HCT116 (cell line): ENCODE measurements at regions of chr19 and their contacts with region 1.

Region 1: GRCh38 chr19:5803752-5804515 is 933 bp upstream of the NRTN start:
- DNase-seq: peak; percentile 78
- ATAC-seq: peak; percentile 88
- H3K4me3 ChIP-seq: peak overlapping the region; percentile 39 to 48
- H3K27ac ChIP-seq: peak overlapping the region; percentile 7; the same call in 1 of the 2 replicates
- H3K4me1 ChIP-seq: peaks cover 5 to 24% of the 10 kb centered on the region in 2 experiments
- H3K27me3 ChIP-seq: no peaks in the 10 kb centered on the region
- CTCF ChIP-seq: peak; percentile 98 to 100 (median 100)
- POLR2A ChIP-seq: no peak
- RAD21 ChIP-seq: peak; percentile 97

Region 2: GRCh38 chr19:5321851-5322681 is 481.9 kb before region 1 on chr19:
- CTCF ChIA-PET with region 1: no interaction called
- POLR2A ChIA-PET with region 1: no interaction called
- RAD21 ChIA-PET with region 1: no interaction called
- intact Hi-C with region 1: no loop called
- DNase-seq: no peak
- ATAC-seq: no peak
- H3K4me3 ChIP-seq: no peak overlapping the region
- H3K27ac ChIP-seq: no peak overlapping the region
- H3K4me1 ChIP-seq: no peaks in the 10 kb centered on the region
- H3K27me3 ChIP-seq: no peaks in the 10 kb centered on the region
- CTCF ChIP-seq: no peak
- POLR2A ChIP-seq: no peak
- RAD21 ChIP-seq: no peak

Region 3: GRCh38 chr19:5719961-5720790 is 83.8 kb before region 1 on chr19 and contains the starts of genes CATSPERD and LONP1:
- CTCF ChIA-PET with region 1: interaction called, 5 read pairs
- POLR2A ChIA-PET with region 1: no interaction called
- RAD21 ChIA-PET with region 1: interaction called in 1 of 2 experiments, 10 read pairs
- intact Hi-C with region 1: no loop called
- DNase-seq: peak; percentile 97
- ATAC-seq: peak; percentile 92
- H3K4me3 ChIP-seq: peak within 1 kb of the TSS; percentile 99 to 100
- H3K27ac ChIP-seq: peak within 1 kb of the TSS; percentile 85
- H3K4me1 ChIP-seq: peaks cover 10 to 28% of the 10 kb centered on the region in 2 experiments
- H3K27me3 ChIP-seq: no peaks in the 10 kb centered on the region
- CTCF ChIP-seq: peak; percentile 62 to 92 (median 88)
- POLR2A ChIP-seq: peak; percentile 67
- RAD21 ChIP-seq: no peak
- total RNA-seq, gene CATSPERD: not detected
- total RNA-seq, gene LONP1: 180 TPM

Region 4: DNA sequence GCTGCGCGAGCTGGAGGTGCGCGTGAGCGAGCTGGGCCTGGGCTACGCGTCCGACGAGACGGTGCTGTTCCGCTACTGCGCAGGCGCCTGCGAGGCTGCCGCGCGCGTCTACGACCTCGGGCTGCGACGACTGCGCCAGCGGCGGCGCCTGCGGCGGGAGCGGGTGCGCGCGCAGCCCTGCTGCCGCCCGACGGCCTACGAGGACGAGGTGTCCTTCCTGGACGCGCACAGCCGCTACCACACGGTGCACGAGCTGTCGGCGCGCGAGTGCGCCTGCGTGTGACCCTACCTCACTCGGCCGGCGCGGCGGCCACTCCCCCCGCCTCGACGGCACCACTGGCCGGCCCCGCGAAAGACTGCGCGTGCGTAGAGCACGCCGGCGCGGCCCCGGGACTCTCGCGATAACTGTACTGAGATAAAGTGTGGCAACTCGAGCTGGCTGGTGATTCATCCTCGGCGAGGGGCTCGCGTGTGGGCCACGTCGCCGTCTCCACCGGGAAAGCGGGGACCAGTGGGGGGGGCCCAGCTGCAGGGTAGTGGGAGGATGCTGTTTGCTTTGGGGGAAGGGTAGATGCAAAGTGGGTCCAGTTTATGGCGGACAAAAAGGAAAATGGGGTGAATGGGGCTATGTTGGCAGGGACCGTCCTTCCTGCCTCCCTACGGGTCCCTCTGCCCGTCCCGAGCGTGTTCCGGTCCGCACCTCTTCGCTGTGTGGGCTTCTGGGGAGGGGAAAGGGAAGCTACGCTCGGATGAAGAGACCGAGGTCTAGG is 24.1 kb after region 1 on chr19:
- CTCF ChIA-PET with region 1: interaction called, 49 read pairs
- POLR2A ChIA-PET with region 1: interaction called, 22 read pairs
- RAD21 ChIA-PET with region 1: interaction called, 4 to 7 read pairs
- intact Hi-C with region 1: loop called (anchors 1 kb)
- DNase-seq: peak; percentile 88
- ATAC-seq: peak; percentile 83
- H3K4me3 ChIP-seq: peak overlapping the region; percentile 83 to 97
- H3K27ac ChIP-seq: peak overlapping the region; percentile 92
- H3K4me1 ChIP-seq: peaks cover 15 to 38% of the 10 kb centered on the region in 2 experiments
- H3K27me3 ChIP-seq: no peaks in the 10 kb centered on the region
- CTCF ChIP-seq: no peak
- POLR2A ChIP-seq: peak; percentile 99
- RAD21 ChIP-seq: no peak

Region 5: GRCh38 chr19:5891938-5892771 is 88.2 kb after region 1 on chr19:
- CTCF ChIA-PET with region 1: interaction called, 48 read pairs
- POLR2A ChIA-PET with region 1: interaction called, 3 read pairs
- RAD21 ChIA-PET with region 1: interaction called, 3 to 4 read pairs
- intact Hi-C with region 1: loop called (anchors 1 kb)
- DNase-seq: no peak
- ATAC-seq: peak; percentile 80
- H3K4me3 ChIP-seq: no peak overlapping the region
- H3K27ac ChIP-seq: no peak overlapping the region
- H3K4me1 ChIP-seq: peaks cover 0 to 3% of the 10 kb centered on the region in 2 experiments; a peak in 1 of 4 replicates
- H3K27me3 ChIP-seq: no peaks in the 10 kb centered on the region
- CTCF ChIP-seq: peak; percentile 77 to 84 (median 83)
- POLR2A ChIP-seq: no peak
- RAD21 ChIP-seq: peak; percentile 86

Region 6: GRCh38 chr19:5967994-5968430 is 164.1 kb after region 1 on chr19:
- CTCF ChIA-PET with region 1: interaction called, 11 read pairs
- POLR2A ChIA-PET with region 1: no interaction called
- RAD21 ChIA-PET with region 1: no interaction called
- intact Hi-C with region 1: no loop called
- DNase-seq: peak; percentile 50
- ATAC-seq: peak; percentile 88
- H3K4me3 ChIP-seq: no peak overlapping the region
- H3K27ac ChIP-seq: peak overlapping the region; percentile 45
- H3K4me1 ChIP-seq: peaks cover 0 to 12% of the 10 kb centered on the region in 2 experiments; a peak in 2 of 4 replicates
- H3K27me3 ChIP-seq: no peaks in the 10 kb centered on the region
- CTCF ChIP-seq: peak; percentile 56 to 89 (median 86)
- POLR2A ChIP-seq: no peak
- RAD21 ChIP-seq: peak; percentile 63

Region 7: GRCh38 chr19:6021878-6022569 is 218.1 kb after region 1 on chr19:
- CTCF ChIA-PET with region 1: interaction called, 46 read pairs
- POLR2A ChIA-PET with region 1: no interaction called
- RAD21 ChIA-PET with region 1: interaction called, 3 to 10 read pairs
- intact Hi-C with region 1: loop called (anchors 2 kb)
- DNase-seq: peak; percentile 47
- ATAC-seq: peak; percentile 98
- H3K4me3 ChIP-seq: no peak overlapping the region
- H3K27ac ChIP-seq: no peak overlapping the region
- H3K4me1 ChIP-seq: peaks cover 0 to 6% of the 10 kb centered on the region in 2 experiments; a peak in 1 of 4 replicates
- H3K27me3 ChIP-seq: no peaks in the 10 kb centered on the region
- CTCF ChIP-seq: peak; percentile 74 to 85 (median 82)
- POLR2A ChIP-seq: no peak
- RAD21 ChIP-seq: peak; percentile 88